Dorsolateral prefrontal cortex (tissue), 120 donors: ENCODE measurements at regions of chr12 and their contacts with region 1.

Region 1: DNA sequence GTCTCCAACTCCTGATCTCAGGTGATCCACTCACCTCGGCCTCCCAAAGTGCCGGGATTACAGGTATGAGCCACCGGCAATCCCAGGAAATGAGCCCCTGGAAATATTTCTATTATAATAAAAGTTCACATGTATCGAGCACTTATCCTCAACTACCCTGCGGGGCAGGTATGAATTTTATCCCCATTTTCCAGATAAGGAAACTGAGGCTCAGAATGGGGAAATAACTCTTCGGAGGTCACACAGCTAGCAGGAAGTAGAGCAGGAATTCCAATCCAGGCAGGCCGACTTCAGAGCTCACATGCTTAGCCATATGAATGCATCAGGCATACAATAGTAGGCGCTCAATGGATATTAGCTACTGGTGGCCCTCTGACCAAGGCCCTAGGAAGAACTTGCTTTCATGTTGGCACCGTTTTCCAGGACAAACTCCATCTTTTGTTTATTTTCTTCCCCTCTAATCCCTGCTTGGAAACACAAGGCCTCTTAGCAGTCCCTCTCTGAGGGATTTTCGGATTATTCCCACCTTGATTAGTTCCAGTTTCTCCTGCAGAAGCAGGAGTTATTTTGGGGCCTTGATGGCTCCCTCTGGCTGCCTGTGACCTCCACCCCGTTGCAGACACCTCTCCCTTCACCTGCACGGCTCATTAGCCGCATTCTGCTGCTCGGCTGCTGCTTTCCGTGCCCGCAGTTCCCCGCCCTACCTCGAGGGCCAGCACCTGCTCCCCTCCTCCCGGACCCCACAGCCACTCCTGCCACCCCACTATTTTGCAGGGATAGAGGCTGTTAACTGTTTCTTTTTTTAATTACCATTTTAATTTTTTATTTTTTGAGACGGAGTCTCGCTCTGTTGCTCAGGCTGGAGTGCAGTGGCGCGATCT is 18.7 kb upstream of the POP5 start:
- DNase-seq: no peak
- H3K4me3 ChIP-seq: peak overlapping the region in 9 of 59 donors; percentile 2 to 40 (median 21)
- H3K27ac ChIP-seq: peak overlapping the region in 49 of 59 donors; percentile 6 to 84 (median 66)
- H3K27me3 ChIP-seq: peaks cover 0 to 3% (median 0%) of the 10 kb centered on the region in 45 donors
- CTCF ChIP-seq: no peak

Region 2: DNA sequence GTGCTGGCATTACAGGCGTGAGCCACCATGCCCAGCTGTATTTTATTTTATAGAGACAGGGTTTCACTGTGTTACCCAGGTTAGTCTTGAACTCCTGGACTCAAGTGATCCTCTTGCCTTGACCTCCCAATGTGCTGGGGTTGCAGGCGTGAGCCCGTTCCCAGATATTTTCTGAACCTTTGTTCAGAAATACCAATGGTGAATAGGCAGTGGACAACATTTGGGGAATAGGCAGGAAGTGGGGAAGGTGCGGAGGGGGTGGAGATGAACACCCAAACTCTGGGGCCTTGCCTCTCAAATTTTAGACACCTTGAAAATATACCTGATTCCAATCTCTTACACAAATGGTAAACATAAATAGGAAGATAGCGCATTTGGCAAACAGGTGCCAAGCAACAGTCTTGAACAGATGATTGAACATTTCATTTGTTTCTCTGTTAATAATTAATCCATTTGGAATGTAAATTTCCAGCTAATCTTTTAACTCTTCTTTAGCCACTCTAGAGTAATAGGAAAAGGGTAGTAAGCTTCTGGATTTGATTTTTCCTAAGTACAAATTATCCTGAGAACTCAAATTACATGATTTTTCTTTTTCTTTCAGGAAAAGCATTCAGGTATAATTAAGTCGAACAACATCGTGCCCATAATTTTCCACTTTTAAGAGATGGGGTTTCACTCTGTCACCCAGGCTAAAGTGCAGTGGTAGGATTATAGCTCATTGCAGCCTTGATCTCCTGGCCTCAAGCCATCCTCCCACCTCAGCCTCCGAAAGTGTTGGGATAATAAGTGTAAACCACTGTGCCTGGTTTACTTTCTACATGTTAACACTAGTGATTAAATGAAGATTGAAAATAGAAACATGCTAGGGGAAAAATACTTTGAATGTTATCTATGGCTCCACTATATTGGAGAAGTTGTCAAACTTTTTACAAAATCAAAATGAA is 777.1 kb after region 1 on chr12:
- intact Hi-C with region 1: loop called in 1 of 2 experiments (anchors 10 kb)
- DNase-seq: no peak
- H3K4me3 ChIP-seq: no peak overlapping the region
- H3K27ac ChIP-seq: no peak overlapping the region
- H3K27me3 ChIP-seq: no peaks in the 10 kb centered on the region
- CTCF ChIP-seq: no peak